Motor neuron (in vitro differentiated cells): ENCODE measurements at regions of chr18 and their contacts with region 1.

Region 1: GRCh38 chr18:48475635-48476549 is 62.9 kb upstream of the CTIF start:
- ATAC-seq: peak; percentile 72 to 97 (median 85)
- H3K4me3 ChIP-seq: no peak overlapping the region
- H3K27ac ChIP-seq: no peak overlapping the region
- H3K4me1 ChIP-seq: no peaks in the 10 kb centered on the region

Region 2: DNA sequence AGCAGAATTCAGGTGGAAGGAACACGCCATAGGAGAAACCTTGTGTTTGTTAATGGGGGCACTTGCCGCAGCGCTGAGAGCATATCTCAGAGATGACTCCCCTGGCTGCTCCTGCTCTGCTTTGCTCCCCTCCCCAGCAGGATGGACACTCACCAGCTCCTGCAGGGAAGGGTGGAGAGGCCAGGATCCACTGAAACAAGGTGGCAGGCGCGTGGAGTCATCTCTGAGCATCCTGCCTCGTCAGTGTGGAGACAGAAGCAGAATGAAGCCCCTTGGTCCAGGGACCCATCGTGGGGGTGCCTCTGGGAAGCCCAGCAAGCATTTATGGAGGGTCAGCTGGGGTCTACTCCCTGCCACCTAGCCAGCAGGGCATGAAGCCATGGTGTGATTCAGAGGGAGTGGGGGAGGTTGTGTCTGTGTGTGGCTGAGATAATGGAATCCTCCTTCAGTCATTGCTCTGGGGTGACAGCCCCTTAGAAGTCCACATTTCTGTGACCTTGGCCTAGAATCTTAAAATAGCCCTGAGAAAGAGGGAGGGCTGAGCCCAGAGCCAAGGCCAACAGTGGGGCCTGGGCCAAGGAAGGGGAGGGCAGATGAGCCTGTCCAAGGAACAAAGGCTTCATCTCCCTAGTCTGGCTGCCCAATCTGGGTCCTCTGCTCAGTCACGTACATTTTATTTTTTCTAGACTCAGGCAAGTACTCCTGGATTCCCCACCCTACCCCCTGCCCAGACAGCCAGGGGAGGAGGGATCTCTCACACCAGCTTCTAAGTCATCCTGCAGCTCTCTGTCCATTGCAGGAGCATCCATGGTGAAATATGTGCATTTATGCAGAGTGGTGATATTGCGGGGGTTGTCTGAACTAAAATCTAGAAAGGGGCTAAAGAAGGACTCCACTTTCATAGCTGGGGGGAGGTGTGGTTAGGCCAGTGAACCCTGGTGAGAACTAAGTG is 282.1 kb before region 1 on chr18:
- in situ Hi-C with region 1: no loop called
- ATAC-seq: peak; percentile 55 to 85 (median 73)
- H3K4me3 ChIP-seq: no peak overlapping the region
- H3K27ac ChIP-seq: no peak overlapping the region
- H3K4me1 ChIP-seq: peaks cover 14 to 17% of the 10 kb centered on the region in 2 donors

Region 3: GRCh38 chr18:48629730-48630324 is 153.9 kb after region 1 on chr18:
- in situ Hi-C with region 1: loop called in 1 of 9 experiments (anchors 25 kb)
- ATAC-seq: peak; percentile 78 to 100 (median 99)
- H3K4me3 ChIP-seq: no peak overlapping the region
- H3K27ac ChIP-seq: peak overlapping the region; percentile 26 to 30
- H3K4me1 ChIP-seq: peaks cover 9% of the 10 kb centered on the region in 2 donors

Region 4: GRCh38 chr18:48663931-48664847 is 188.3 kb after region 1 on chr18:
- in situ Hi-C with region 1: loop called in 3 of 9 experiments (anchors 10 kb)
- ATAC-seq: peak in 3 of 8 experiments; percentile 45 to 64 (median 56)
- H3K4me3 ChIP-seq: no peak overlapping the region
- H3K27ac ChIP-seq: no peak overlapping the region
- H3K4me1 ChIP-seq: peaks cover 10 to 22% of the 10 kb centered on the region in 2 donors